Activated CD4-positive, alpha-beta T cell treated with anti-CD3 and anti-CD28 coated beads for 36 hours (primary cell): ENCODE measurements at regions of chr7 and their contacts with region 1.

Region 1: GRCh38 chr7:148884299-148885022 is 370 bp upstream of the EZH2 start:
- DNase-seq: peak; percentile 97
- ATAC-seq: peak; percentile 92
- H3K4me3 Mint-ChIP-seq: peak overlapping the region; percentile 95
- H3K27ac Mint-ChIP-seq: peak overlapping the region; percentile 99
- H3K4me1 Mint-ChIP-seq: peaks cover 34% of the 10 kb centered on the region
- H3K27me3 Mint-ChIP-seq: no peaks in the 10 kb centered on the region

Region 2: GRCh38 chr7:148914208-148914777 is 29.8 kb after region 1 on chr7:
- CTCF ChIA-PET with region 1: interaction called, 5 read pairs
- POLR2A ChIA-PET with region 1: interaction called, 23 read pairs
- intact Hi-C with region 1: loop called (anchors 1 kb)
- DNase-seq: peak; percentile 82
- ATAC-seq: peak; percentile 62
- H3K4me3 Mint-ChIP-seq: peak overlapping the region; percentile 47
- H3K27ac Mint-ChIP-seq: peak overlapping the region; percentile 98
- H3K4me1 Mint-ChIP-seq: peaks cover 73% of the 10 kb centered on the region
- H3K27me3 Mint-ChIP-seq: no peaks in the 10 kb centered on the region

Region 3: DNA sequence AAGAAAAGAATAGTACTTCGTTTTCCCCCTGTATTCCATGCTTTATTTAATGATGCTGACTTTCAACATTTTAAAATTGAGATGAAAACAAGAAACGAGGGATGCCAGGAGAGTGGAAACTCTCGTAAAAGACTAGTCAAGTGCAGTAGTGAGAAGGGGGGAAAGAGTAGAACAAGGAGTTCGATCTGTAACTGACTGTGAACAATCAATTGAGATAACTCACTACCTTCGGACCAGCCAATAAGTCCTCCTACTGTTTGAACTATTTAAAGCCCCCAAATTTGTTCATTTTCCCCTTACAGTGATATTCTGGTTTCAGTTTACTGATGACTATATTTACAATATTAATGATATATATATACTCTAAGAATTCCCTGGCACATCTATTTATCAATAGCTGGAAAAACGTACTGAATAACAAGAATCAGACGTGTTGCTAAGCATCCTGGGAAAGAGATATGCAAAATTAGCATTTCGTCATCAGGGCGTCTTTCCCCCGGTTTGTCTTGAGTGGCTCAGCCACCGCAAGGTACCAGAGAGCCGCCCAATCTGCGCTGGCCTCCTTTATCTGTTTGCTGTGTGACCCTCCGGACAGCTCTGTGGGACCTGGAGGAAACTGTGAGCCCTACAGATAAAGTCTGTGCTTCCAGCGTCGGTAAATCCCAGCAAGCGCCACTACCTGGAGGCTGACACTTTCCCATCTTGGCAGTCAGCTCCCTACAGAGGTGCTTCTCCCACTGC is 102.7 kb after region 1 on chr7:
- CTCF ChIA-PET with region 1: no interaction called
- POLR2A ChIA-PET with region 1: interaction called, 4 read pairs
- intact Hi-C with region 1: loop called in 1 of 2 experiments (anchors 1 kb)
- DNase-seq: peak; percentile 88
- ATAC-seq: peak; percentile 84
- H3K4me3 Mint-ChIP-seq: peak overlapping the region; percentile 90
- H3K27ac Mint-ChIP-seq: peak overlapping the region; percentile 97
- H3K4me1 Mint-ChIP-seq: peaks cover 40% of the 10 kb centered on the region
- H3K27me3 Mint-ChIP-seq: peaks cover 2% of the 10 kb centered on the region

Region 4: GRCh38 chr7:149125863-149126661 is 241.6 kb after region 1 on chr7 and contains the start of gene ZNF425:
- CTCF ChIA-PET with region 1: no interaction called
- POLR2A ChIA-PET with region 1: no interaction called
- intact Hi-C with region 1: loop called in 1 of 2 experiments (anchors 1 kb)
- DNase-seq: peak; percentile 96
- ATAC-seq: peak; percentile 88
- H3K4me3 Mint-ChIP-seq: peak within 1 kb of the TSS; percentile 83
- H3K27ac Mint-ChIP-seq: peak within 1 kb of the TSS; percentile 99
- H3K4me1 Mint-ChIP-seq: peaks cover 21% of the 10 kb centered on the region
- H3K27me3 Mint-ChIP-seq: no peaks in the 10 kb centered on the region
- total RNA-seq, gene ZNF425: 0.43 to 0.95 TPM

Region 5: DNA sequence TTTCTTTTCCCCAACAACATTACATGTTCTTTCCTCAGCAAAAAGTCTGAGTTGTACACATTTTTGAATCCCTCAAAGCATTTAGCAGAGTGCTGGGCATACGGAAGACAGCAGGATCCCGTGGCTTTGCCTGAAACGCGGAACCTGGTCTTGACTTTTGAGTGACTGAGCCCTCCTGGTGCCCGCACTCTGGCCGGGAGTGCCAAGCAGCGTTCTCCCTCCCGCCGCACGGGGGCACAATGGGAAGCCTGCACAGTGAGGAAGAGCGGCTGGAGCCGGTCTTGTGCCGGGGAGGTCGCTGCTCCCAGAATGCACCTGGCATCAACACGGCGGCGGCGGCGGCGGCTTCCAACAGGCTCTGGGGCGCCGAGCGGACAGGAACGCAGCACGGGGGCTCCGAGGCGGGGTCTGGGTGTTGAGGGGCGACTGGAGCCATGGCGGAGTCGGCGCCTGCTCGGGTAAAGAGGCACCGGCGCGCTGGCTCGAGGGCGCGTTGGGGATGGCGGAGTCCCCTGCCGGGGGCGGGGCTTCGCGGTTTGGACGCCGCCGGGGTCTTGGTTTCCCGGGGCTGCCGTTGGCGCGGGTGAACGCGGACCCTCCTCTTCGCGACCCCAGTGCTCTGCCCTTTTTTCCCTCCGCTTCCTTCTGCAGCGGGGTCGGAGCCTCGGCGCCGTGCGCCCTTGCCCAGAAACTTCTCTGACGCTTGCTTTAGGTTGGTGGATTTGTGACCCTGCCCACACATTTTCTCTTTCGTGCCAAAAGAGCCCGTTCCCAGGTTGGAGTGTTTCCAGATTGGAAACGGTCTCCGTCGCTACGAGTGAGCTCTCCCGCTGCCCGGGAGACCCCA is 355.1 kb after region 1 on chr7 and contains the start of gene ZNF212:
- CTCF ChIA-PET with region 1: no interaction called
- POLR2A ChIA-PET with region 1: no interaction called
- intact Hi-C with region 1: loop called in 1 of 2 experiments (anchors 10 kb)
- DNase-seq: peak; percentile 95
- ATAC-seq: peak; percentile 98
- H3K4me3 Mint-ChIP-seq: peak within 1 kb of the TSS; percentile 93
- H3K27ac Mint-ChIP-seq: peak within 1 kb of the TSS; percentile 83
- H3K4me1 Mint-ChIP-seq: peaks cover 32% of the 10 kb centered on the region
- H3K27me3 Mint-ChIP-seq: no peaks in the 10 kb centered on the region
- total RNA-seq, gene ZNF212: 9.9 to 15.9 TPM